ENCODE measurements at regions of chr11 and their contacts with region 1.

Region 1: GRCh38 chr11:62831520-62832335 is at the start of gene STX5:
- DNase-seq: peak; percentile 99 to 100 (median 100)
- ATAC-seq: peak; percentile 97
- H3K4me3 ChIP-seq: peak within 1 kb of the TSS; percentile 88 to 95
- H3K4me3 Mint-ChIP-seq: peak within 1 kb of the TSS; percentile 96
- H3K27ac ChIP-seq: peak within 1 kb of the TSS; percentile 94 to 95
- H3K27ac Mint-ChIP-seq: peak within 1 kb of the TSS; percentile 98
- H3K4me1 ChIP-seq: peaks cover 21% of the 10 kb centered on the region
- H3K4me1 Mint-ChIP-seq: peaks cover 42% of the 10 kb centered on the region
- H3K27me3 ChIP-seq: no peaks in the 10 kb centered on the region
- H3K27me3 Mint-ChIP-seq: no peaks in the 10 kb centered on the region
- CTCF ChIP-seq: no peak
- total RNA-seq, gene STX5: 113 TPM

Region 2: DNA sequence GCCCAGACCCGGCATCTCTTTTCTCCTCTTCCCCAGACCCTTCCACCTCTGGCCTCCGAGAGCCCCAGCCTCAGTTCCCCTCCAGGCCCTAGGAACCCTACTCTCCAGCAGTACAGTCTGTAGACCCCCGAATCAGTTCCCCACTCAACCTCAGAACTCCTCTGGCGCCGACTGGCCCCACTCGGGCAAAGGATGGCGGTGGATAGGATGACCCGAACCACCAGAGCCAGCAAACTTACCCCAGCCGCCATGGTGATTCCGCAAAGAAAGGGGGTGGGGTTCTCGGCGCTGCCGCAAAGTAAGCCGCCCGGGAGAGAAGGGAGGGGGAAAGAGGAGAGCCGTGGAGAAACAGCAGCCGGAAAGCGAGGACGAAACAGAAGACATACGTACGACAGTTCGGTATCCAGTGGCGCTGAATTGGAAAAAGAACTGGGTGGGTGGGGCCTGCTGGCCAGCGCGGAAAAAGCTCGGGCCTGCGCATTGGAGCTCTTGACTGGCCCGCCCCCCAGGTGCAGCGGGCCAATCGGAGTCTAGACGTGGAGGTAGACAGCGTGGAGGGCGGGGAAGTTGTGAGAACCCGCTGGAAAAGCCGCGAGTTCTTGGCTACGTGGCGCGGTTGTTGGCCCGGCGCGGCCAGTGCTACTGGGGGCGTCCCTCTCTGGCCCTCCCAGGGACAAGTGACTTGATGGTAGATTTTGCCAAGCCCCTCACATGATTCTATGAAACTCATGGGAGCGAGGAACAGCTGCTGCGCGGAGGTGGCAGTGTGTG is 258.0 kb before region 1 on chr11 and contains the start of gene EEF1G:
- CTCF ChIA-PET with region 1: no interaction called
- POLR2A ChIA-PET with region 1: no interaction called
- intact Hi-C with region 1: no loop called
- DNase-seq: peak; percentile 95 to 100 (median 97)
- ATAC-seq: peak; percentile 94
- H3K4me3 ChIP-seq: peak within 1 kb of the TSS; percentile 97 to 99
- H3K4me3 Mint-ChIP-seq: peak within 1 kb of the TSS; percentile 97
- H3K27ac ChIP-seq: peak within 1 kb of the TSS; percentile 85
- H3K27ac Mint-ChIP-seq: peak within 1 kb of the TSS; percentile 90
- H3K4me1 ChIP-seq: peaks cover 28% of the 10 kb centered on the region
- H3K4me1 Mint-ChIP-seq: peaks cover 55% of the 10 kb centered on the region
- H3K27me3 ChIP-seq: no peaks in the 10 kb centered on the region
- H3K27me3 Mint-ChIP-seq: no peaks in the 10 kb centered on the region
- CTCF ChIP-seq: no peak
- total RNA-seq, gene EEF1G: 2,174 to 2,204 TPM

Region 3: DNA sequence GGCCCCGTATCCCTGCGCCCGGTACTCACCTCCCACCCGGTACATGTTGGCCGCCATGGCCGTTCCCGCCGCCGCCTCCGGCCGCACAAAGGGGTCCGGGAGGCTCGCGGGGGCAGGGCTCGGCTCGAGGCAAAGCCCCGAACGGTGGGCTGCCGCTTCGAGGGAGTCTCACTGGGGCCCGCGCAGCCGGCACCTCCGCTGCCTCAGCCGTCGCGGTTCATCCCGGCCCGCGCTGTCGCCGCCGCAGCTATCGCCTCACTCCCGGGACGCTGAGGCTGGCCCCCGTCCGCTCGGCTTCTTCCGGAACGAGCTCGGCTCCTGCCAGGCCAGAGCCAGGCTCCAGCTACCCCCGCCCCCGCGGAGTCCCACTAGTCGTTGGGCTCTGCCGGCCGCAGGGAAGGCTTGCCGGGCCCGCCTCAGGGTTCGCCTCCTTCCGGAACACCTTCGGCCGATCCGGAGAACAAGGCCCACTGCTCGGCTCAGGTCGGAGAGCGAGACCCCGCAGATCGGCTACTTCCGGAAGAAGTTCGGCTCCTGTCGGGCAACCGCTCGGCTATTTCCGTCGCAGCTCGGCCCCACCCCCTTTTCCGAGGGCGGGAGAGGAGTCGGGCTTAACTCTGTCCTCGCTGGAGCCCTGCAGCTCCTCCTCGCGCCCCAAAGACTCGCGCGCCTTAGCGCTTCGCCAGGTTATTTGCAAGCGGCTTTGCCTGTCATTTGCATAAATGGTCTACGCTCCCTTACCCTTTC is 230.2 kb before region 1 on chr11 and contains the start of gene MTA2:
- CTCF ChIA-PET with region 1: no interaction called
- POLR2A ChIA-PET with region 1: interaction called, 3 read pairs
- intact Hi-C with region 1: loop called in 1 of 2 experiments (anchors 1 kb)
- DNase-seq: peak; percentile 98 to 100 (median 99)
- ATAC-seq: peak; percentile 77
- H3K4me3 ChIP-seq: peak within 1 kb of the TSS; percentile 62 to 98
- H3K4me3 Mint-ChIP-seq: peak within 1 kb of the TSS; percentile 89
- H3K27ac ChIP-seq: peak within 1 kb of the TSS; percentile 83 to 86
- H3K27ac Mint-ChIP-seq: peak within 1 kb of the TSS; percentile 92
- H3K4me1 ChIP-seq: peaks cover 22% of the 10 kb centered on the region
- H3K4me1 Mint-ChIP-seq: peaks cover 57% of the 10 kb centered on the region
- H3K27me3 ChIP-seq: no peaks in the 10 kb centered on the region
- H3K27me3 Mint-ChIP-seq: no peaks in the 10 kb centered on the region
- CTCF ChIP-seq: no peak
- total RNA-seq, gene MTA2: 148 to 154 TPM

Region 4: GRCh38 chr11:62771144-62772021 is 60.3 kb before region 1 on chr11 and contains the start of gene TAF6L:
- CTCF ChIA-PET with region 1: no interaction called
- POLR2A ChIA-PET with region 1: no interaction called
- intact Hi-C with region 1: loop called in 1 of 2 experiments (anchors 1 kb)
- DNase-seq: peak; percentile 74 to 93 (median 87)
- ATAC-seq: peak; percentile 83
- H3K4me3 ChIP-seq: peak within 1 kb of the TSS; percentile 66 to 78
- H3K4me3 Mint-ChIP-seq: peak within 1 kb of the TSS; percentile 91
- H3K27ac ChIP-seq: peak within 1 kb of the TSS; percentile 64 to 83
- H3K27ac Mint-ChIP-seq: peak within 1 kb of the TSS; percentile 94
- H3K4me1 ChIP-seq: peaks cover 22% of the 10 kb centered on the region
- H3K4me1 Mint-ChIP-seq: peaks cover 27% of the 10 kb centered on the region
- H3K27me3 ChIP-seq: no peaks in the 10 kb centered on the region
- H3K27me3 Mint-ChIP-seq: no peaks in the 10 kb centered on the region
- CTCF ChIP-seq: no peak
- total RNA-seq, gene TAF6L: 10.3 to 13.2 TPM

Region 5: DNA sequence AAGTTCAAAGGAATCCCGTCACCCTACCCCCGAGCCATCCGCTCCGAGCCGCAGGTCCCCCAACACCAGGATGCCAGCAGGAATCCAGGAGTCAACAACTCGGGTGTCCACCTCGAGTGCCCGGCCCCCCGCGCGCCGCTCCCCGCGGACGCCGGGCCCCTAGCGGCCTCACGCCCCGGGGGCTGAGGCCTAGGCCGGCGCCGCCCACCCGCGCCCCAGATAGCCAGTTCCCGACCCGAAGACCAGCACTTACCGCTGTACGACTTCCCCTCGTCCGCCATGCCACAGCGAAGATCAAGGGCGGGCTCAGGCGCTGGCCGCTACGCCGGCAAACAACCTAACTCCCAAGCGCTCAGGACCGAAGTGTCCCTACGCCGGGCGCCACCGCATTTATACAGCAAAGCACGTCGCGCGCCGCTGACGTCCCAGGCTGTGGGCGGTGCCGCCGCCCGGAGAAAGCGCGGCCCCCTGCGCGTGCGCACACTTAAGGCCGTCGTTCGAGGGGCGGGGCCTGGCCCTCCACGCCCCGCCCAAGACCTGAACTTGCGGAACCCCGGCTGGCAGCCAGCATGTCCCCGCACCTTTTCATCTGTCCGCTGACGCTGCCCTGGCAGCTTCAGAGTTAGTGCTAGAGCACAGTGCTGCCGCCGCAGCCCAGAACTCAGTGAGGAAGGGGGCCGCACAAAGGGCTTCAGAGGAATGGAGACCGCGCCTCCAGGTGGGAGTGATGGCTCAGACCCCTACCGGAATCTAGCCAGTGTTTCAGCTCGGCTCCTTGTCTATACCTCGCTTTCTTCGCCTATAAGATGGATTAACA is 26.4 kb before region 1 on chr11 and contains the start of gene NXF1:
- CTCF ChIA-PET with region 1: no interaction called
- POLR2A ChIA-PET with region 1: interaction called, 12 read pairs
- intact Hi-C with region 1: loop called (anchors 1 kb)
- DNase-seq: peak; percentile 92 to 99 (median 96)
- ATAC-seq: peak; percentile 86
- H3K4me3 ChIP-seq: peak within 1 kb of the TSS; percentile 74 to 88
- H3K4me3 Mint-ChIP-seq: peak within 1 kb of the TSS; percentile 100
- H3K27ac ChIP-seq: peak within 1 kb of the TSS; percentile 78 to 95
- H3K27ac Mint-ChIP-seq: peak within 1 kb of the TSS; percentile 99
- H3K4me1 ChIP-seq: peaks cover 20% of the 10 kb centered on the region
- H3K4me1 Mint-ChIP-seq: peaks cover 37% of the 10 kb centered on the region
- H3K27me3 ChIP-seq: no peaks in the 10 kb centered on the region
- H3K27me3 Mint-ChIP-seq: no peaks in the 10 kb centered on the region
- CTCF ChIP-seq: no peak
- total RNA-seq, gene NXF1: 356 TPM

Region 6: GRCh38 chr11:62855571-62856332 is 24.0 kb after region 1 on chr11:
- CTCF ChIA-PET with region 1: no interaction called
- POLR2A ChIA-PET with region 1: interaction called, 34 read pairs
- intact Hi-C with region 1: loop called in 1 of 2 experiments (anchors 1 kb)
- DNase-seq: peak; percentile 96 to 100 (median 98)
- ATAC-seq: peak; percentile 91
- H3K4me3 ChIP-seq: peak overlapping the region; percentile 82 to 89
- H3K4me3 Mint-ChIP-seq: peak overlapping the region; percentile 96
- H3K27ac ChIP-seq: peak overlapping the region; percentile 76 to 84
- H3K27ac Mint-ChIP-seq: peak overlapping the region; percentile 91
- H3K4me1 ChIP-seq: peaks cover 36% of the 10 kb centered on the region
- H3K4me1 Mint-ChIP-seq: peaks cover 56% of the 10 kb centered on the region
- H3K27me3 ChIP-seq: no peaks in the 10 kb centered on the region
- H3K27me3 Mint-ChIP-seq: no peaks in the 10 kb centered on the region
- CTCF ChIP-seq: no peak